Astrocyte of the cerebellum (primary cell): ENCODE measurements at regions of chr20 and their contacts with region 1.

Region 1: GRCh38 chr20:20860078-20860806 is 147.8 kb upstream of the RALGAPA2 start:
- DNase-seq: peak; percentile 51
- H3K4me3 ChIP-seq: no peak overlapping the region
- CTCF ChIP-seq: peak; percentile 90

Region 2: GRCh38 chr20:20786428-20786827 is 73.8 kb before region 1 on chr20:
- in situ Hi-C with region 1: no loop called
- DNase-seq: no peak
- H3K4me3 ChIP-seq: no peak overlapping the region
- CTCF ChIP-seq: no peak

Region 3: DNA sequence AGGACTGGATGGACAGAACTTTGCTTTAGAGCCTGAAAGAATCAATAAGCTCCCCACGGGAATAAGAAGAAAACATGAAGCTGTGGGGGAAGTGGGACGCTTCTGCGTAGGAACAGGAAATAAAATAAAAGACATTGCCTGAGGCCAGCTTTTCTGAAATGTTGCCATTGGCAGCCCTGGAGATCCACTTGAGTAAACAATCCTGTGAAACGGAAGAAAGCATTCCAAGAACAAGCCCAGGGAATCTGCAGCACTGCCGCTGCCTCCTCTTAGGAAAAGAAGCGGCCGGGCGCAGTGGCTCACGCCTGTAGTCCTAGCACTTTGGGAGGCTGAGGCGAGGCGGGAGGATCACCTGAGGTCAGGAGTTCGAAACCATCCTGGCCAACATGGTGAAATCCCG is 34.5 kb after region 1 on chr20:
- in situ Hi-C with region 1: no loop called
- DNase-seq: no peak
- H3K4me3 ChIP-seq: no peak overlapping the region
- CTCF ChIP-seq: no peak

Region 4: DNA sequence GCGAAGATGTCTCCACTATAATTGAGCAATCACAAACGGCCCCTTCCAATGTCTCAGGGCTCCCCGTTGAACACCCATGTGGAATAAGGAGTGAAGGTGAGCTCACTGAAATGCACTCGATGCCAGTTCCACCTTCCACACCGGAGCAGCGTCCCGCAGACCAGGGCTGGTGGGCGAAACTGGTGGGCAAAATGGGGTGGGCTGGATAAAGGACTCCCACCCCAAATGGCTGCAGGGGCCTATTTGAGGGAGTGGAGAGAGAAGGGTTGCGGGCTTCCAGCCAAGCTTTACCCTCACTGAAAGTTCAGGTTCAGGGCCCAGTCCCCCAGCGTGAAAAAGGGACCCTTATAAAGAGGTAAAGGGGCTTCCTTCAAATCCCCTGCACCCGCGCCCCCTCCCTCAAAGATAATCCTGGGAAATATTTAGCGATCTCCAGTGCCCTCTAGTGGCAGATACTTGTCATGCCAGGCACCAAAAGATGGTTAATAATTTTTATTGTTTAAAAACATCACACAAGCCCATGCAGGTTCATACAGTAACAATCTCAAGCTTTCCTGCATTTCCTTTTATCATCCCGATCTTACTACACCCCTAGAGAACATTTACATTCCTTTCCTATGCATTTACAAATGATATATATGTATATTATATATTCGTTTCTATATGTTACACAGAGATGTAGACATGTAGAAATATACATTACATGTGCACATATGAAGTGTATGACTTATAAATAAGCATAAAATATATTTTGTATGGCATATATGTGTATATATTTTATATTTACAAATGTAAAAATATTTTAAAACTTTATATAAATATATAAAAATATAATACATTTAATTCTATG is 711.8 kb after region 1 on chr20:
- in situ Hi-C with region 1: loop called (anchors 5 kb)
- DNase-seq: no peak
- H3K4me3 ChIP-seq: no peak overlapping the region
- CTCF ChIP-seq: peak; percentile 84